ENCODE measurements at regions of chr6 and their contacts with region 1.

Region 1: DNA sequence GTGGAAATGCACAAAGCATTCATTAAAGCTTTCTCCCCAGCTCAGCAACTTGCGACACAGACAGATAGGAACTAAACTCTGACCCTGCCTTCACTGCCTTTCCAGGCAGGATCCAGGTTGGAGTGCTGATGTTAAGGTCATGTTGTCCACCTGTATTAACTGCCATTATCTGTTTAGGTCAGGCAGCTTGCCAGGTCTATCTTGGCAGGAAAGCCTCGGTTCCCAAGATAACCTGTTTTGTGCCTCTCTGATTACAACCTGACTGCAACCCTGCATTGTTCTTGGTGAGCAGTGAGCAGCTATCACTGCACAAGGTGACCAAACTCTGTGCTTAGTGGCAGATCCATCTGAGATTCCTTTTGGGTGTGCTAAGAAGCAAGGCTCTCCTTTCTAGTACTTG is 23.2 kb upstream of the ELOVL2 start:
- DNase-seq: no peak
- H3K4me3 ChIP-seq: no peak overlapping the region
- H3K27ac ChIP-seq: no peak overlapping the region
- H3K4me1 ChIP-seq: no peaks in the 10 kb centered on the region
- H3K27me3 ChIP-seq: peaks cover 0 to 1% (median 0%) of the 10 kb centered on the region in 5 experiments

Region 2: GRCh38 chr6:10954590-10955010 is 112.7 kb before region 1 on chr6:
- CTCF ChIA-PET with region 1: interaction called, 21 read pairs
- POLR2A ChIA-PET with region 1: no interaction called
- DNase-seq: peak; percentile 64 to 82 (median 81)
- H3K4me3 ChIP-seq: no peak overlapping the region
- H3K27ac ChIP-seq: no peak overlapping the region
- H3K4me1 ChIP-seq: no peaks in the 10 kb centered on the region
- H3K27me3 ChIP-seq: no peaks in the 10 kb centered on the region

Measured in common myeloid progenitor, CD34-positive (primary cell).